ENCODE measurements at regions of chr5 and their contacts with region 1.

Region 1: GRCh38 chr5:67493676-67494075 is 297.1 kb upstream of the CD180 start:
- DNase-seq: peak in 4 of 14 experiments; percentile 6 to 18 (median 14)
- ATAC-seq: no peak
- H3K4me3 ChIP-seq: no peak overlapping the region
- H3K4me3 Mint-ChIP-seq: no peak overlapping the region
- H3K27ac ChIP-seq: no peak overlapping the region
- H3K27ac Mint-ChIP-seq: no peak overlapping the region
- H3K4me1 ChIP-seq: no peaks in the 10 kb centered on the region
- H3K4me1 Mint-ChIP-seq: no peaks in the 10 kb centered on the region
- H3K27me3 ChIP-seq: no peaks in the 10 kb centered on the region
- H3K27me3 Mint-ChIP-seq: no peaks in the 10 kb centered on the region
- CTCF ChIP-seq: no peak

Region 2: DNA sequence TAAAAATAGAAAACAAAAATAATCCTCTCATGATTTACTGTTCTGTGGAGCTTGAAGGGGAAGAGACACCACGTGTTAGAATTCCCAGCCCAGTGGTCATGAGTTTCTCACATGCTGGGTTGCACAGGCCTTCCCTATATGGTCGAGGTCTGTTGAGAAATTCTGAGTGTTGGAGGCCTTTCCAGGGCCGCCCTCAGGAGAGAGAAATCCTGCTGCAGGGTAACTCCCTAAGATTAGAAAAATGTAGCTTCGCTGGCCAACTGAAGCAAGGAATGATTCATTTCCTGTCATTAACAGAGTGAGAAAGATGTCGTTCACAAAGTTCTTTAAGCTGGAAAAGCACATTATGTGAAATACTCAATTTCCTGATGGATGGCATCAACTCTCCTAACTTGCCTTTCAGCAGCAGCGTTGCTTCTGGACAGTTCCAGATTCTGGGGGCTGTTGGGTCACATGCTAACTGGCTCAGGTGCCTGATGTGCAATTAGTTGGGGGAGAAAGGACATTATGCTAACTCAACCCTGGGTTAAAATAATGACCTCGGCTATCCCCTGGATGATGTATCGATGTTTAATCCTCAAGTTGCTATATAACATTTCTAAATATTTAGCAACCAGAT is 192.3 kb before region 1 on chr5:
- CTCF ChIA-PET with region 1: no interaction called
- POLR2A ChIA-PET with region 1: no interaction called
- intact Hi-C with region 1: loop called in 1 of 2 experiments (anchors 10 kb)
- DNase-seq: peak in 2 of 14 experiments; percentile 45 to 60
- ATAC-seq: no peak
- H3K4me3 ChIP-seq: no peak overlapping the region
- H3K4me3 Mint-ChIP-seq: no peak overlapping the region
- H3K27ac ChIP-seq: no peak overlapping the region
- H3K27ac Mint-ChIP-seq: no peak overlapping the region
- H3K4me1 ChIP-seq: peaks cover 4% of the 10 kb centered on the region
- H3K4me1 Mint-ChIP-seq: peaks cover 3% of the 10 kb centered on the region
- H3K27me3 ChIP-seq: no peaks in the 10 kb centered on the region
- H3K27me3 Mint-ChIP-seq: peaks cover 7% of the 10 kb centered on the region
- CTCF ChIP-seq: no peak

Region 3: DNA sequence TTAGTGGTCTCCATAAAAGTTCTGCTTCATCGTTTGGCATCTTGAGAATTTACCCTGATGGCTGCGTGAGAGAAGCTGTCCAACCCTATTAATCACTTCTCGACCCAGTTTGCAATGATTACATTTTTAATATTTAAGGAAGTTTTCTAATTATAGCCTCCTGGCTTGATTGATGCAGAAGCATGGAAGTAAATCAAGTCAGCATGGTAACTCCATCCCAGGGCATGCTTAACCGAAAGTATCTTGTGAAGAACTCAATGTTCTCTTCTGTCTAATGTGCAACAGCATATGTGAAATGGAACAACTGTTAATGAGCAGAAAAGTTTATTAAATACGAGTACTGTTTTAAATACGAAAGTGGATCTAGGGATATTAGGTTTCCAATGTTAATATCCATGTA is 18.2 kb before region 1 on chr5:
- CTCF ChIA-PET with region 1: no interaction called
- POLR2A ChIA-PET with region 1: no interaction called
- intact Hi-C with region 1: no loop called
- DNase-seq: no peak
- ATAC-seq: no peak
- H3K4me3 ChIP-seq: no peak overlapping the region
- H3K4me3 Mint-ChIP-seq: no peak overlapping the region
- H3K27ac ChIP-seq: no peak overlapping the region
- H3K27ac Mint-ChIP-seq: no peak overlapping the region
- H3K4me1 ChIP-seq: no peaks in the 10 kb centered on the region
- H3K4me1 Mint-ChIP-seq: peaks cover 8% of the 10 kb centered on the region
- H3K27me3 ChIP-seq: no peaks in the 10 kb centered on the region
- H3K27me3 Mint-ChIP-seq: no peaks in the 10 kb centered on the region
- CTCF ChIP-seq: no peak

Measured in CD4-positive, alpha-beta T cell (primary cell).